WTC11 (cell line): ENCODE measurements at regions of chr9 and their contacts with region 1.

Region 1: DNA sequence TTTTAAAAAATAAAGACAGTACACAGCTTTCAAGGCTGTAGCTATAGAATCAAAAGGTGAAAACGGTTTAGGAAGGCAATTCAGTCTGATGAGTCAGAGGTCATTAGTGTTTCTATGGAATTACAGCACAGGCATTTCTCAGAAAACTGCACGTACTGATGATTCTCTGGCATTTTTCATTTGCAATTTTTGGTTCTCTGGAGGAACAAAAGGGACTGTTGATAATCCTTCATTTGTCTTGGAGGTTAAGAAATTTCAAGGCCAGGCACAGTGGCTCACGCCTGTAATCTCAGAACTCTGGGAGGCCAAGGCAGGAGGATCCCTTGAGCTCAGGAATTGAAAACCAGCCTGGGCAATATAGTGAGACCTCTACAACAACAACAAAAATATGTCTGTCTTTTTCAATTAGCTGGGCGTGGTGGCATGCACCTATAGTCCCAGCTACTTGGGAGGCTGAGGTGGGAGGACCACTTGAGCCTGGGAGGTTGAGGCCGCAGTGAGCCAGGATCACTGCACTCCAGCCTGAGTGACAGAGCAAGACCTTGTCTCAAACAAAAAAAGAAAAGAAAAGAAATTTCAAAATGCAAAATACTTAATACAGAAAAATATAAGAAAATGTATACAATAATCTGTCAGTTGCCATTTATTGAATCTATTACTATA is 27.3 kb downstream of the NR6A1 start:
- DNase-seq: no peak
- ATAC-seq: no peak
- H3K4me3 Mint-ChIP-seq: no peak overlapping the region
- H3K27ac Mint-ChIP-seq: no peak overlapping the region
- H3K4me1 Mint-ChIP-seq: peaks cover 46% of the 10 kb centered on the region
- H3K27me3 Mint-ChIP-seq: no peaks in the 10 kb centered on the region
- CTCF ChIP-seq: no peak

Region 2: GRCh38 chr9:124658165-124659017 is 85.4 kb before region 1 on chr9:
- CTCF ChIA-PET with region 1: no interaction called
- POLR2A ChIA-PET with region 1: no interaction called
- DNase-seq: peak; percentile 30
- ATAC-seq: peak; percentile 92
- H3K4me3 Mint-ChIP-seq: peak overlapping the region; percentile 66
- H3K27ac Mint-ChIP-seq: peak overlapping the region; percentile 98
- H3K4me1 Mint-ChIP-seq: peaks cover 50% of the 10 kb centered on the region
- H3K27me3 Mint-ChIP-seq: no peaks in the 10 kb centered on the region
- CTCF ChIP-seq: no peak

Region 3: DNA sequence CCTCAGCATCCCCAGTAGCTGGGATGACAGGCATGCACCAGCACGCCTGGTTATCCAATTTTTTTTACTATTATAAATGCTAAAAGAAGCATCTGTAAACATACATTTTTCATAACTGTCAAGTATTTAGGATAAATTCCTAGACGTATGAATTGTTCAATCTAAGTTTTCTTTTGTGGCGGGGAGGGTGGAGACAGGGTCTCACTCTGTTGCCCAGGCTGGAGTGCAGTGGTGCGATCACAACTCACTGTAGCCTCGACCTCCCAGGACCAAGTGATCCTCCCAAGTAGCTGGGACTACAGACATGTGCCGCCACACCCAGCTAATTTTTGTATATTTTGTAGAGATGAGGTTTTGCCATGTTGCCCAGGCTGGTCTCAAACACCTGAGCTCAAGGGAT is 24.9 kb before region 1 on chr9:
- CTCF ChIA-PET with region 1: no interaction called
- POLR2A ChIA-PET with region 1: no interaction called
- DNase-seq: no peak
- ATAC-seq: no peak
- H3K4me3 Mint-ChIP-seq: no peak overlapping the region
- H3K27ac Mint-ChIP-seq: no peak overlapping the region
- H3K4me1 Mint-ChIP-seq: peaks cover 31% of the 10 kb centered on the region
- H3K27me3 Mint-ChIP-seq: no peaks in the 10 kb centered on the region
- CTCF ChIP-seq: no peak

Region 4: GRCh38 chr9:124764774-124765438 is 21.1 kb after region 1 on chr9:
- CTCF ChIA-PET with region 1: interaction called, 13 read pairs
- POLR2A ChIA-PET with region 1: interaction called, 4 read pairs
- DNase-seq: no peak
- ATAC-seq: 0 out of 2 replicates have a peak, but pooled peaks have one; percentile 12
- H3K4me3 Mint-ChIP-seq: peak overlapping the region; percentile 47
- H3K27ac Mint-ChIP-seq: 0 out of 2 replicates have a peak overlapping the region, but pooled peaks have one; percentile 46
- H3K4me1 Mint-ChIP-seq: peaks cover 93% of the 10 kb centered on the region
- H3K27me3 Mint-ChIP-seq: no peaks in the 10 kb centered on the region; the same call in none of the 2 replicates
- CTCF ChIP-seq: no peak

Region 5: DNA sequence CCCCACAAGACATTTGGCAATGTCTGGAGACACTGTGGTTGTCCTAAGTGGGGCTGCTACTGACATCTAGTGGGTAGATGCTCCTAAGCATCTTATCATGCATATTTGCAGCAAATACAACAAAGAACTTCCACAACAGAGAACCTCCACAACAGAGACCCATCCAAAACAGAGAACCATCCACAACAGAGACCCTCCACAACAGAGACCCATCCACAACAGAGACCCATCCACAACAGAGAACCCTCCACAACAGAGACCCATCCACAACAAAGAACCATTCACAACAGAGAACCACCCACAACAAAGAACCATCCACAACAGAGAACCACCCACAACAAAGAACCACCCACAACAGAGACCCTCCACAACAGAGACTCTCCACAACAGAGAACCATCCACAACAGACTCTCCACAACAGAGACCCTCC is 150.9 kb after region 1 on chr9:
- CTCF ChIA-PET with region 1: no interaction called
- POLR2A ChIA-PET with region 1: no interaction called
- DNase-seq: peak; percentile 39
- ATAC-seq: peak; percentile 92
- H3K4me3 Mint-ChIP-seq: no peak overlapping the region
- H3K27ac Mint-ChIP-seq: peak overlapping the region; percentile 61
- H3K4me1 Mint-ChIP-seq: peaks cover 7% of the 10 kb centered on the region; the same call in 1 of the 2 replicates
- H3K27me3 Mint-ChIP-seq: no peaks in the 10 kb centered on the region
- CTCF ChIP-seq: no peak

Region 6: DNA sequence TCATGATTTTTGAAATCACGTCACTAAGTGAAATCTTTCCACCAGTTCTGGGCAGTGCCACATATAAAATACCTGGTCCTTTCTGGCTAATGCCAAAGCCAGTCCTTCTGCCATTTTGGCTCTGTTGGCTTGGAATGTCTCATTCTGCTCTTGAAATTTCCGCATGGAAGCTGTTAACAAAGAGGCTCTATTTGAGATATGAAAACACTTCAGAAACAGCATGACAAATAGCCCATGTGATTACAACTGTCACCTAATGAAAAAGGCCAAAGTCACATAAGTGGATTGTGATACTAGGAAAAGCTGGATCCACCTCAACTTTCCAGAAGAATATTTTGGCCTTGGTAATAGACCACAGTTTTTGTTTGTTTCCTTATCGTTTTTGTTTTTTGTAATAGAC is 184.3 kb after region 1 on chr9:
- CTCF ChIA-PET with region 1: no interaction called
- POLR2A ChIA-PET with region 1: no interaction called
- DNase-seq: no peak
- ATAC-seq: no peak
- H3K4me3 Mint-ChIP-seq: no peak overlapping the region
- H3K27ac Mint-ChIP-seq: no peak overlapping the region
- H3K4me1 Mint-ChIP-seq: no peaks in the 10 kb centered on the region
- H3K27me3 Mint-ChIP-seq: no peaks in the 10 kb centered on the region
- CTCF ChIP-seq: no peak